B cell (primary cell): ENCODE measurements at regions of chr18 and their contacts with region 1.

Region 1: GRCh38 chr18:58911766-58912165 is 47.1 kb downstream of the ZNF532 start:
- DNase-seq: no peak
- ATAC-seq: no peak
- H3K4me3 ChIP-seq: no peak overlapping the region
- H3K4me3 Mint-ChIP-seq: peak overlapping the region; percentile 9
- H3K27ac ChIP-seq: peak overlapping the region in 1 of 2 donors; percentile 89
- H3K27ac Mint-ChIP-seq: peak overlapping the region; percentile 83
- H3K4me1 ChIP-seq: peaks cover 34 to 52% of the 10 kb centered on the region in 2 donors
- H3K4me1 Mint-ChIP-seq: peaks cover 68% of the 10 kb centered on the region
- H3K27me3 ChIP-seq: no peaks in the 10 kb centered on the region
- H3K27me3 Mint-ChIP-seq: no peaks in the 10 kb centered on the region
- CTCF ChIP-seq: no peak

Region 2: GRCh38 chr18:58896268-58896667 is 15.5 kb before region 1 on chr18:
- CTCF ChIA-PET with region 1: interaction called, 8 read pairs
- POLR2A ChIA-PET with region 1: interaction called, 4 read pairs
- intact Hi-C with region 1: loop called (anchors 2 kb)
- DNase-seq: peak; percentile 72
- ATAC-seq: peak; percentile 88
- H3K4me3 ChIP-seq: peak overlapping the region in 4 of 5 experiments; percentile 31 to 58 (median 50)
- H3K4me3 Mint-ChIP-seq: peak overlapping the region; percentile 79
- H3K27ac ChIP-seq: peak overlapping the region; percentile 70 to 86
- H3K27ac Mint-ChIP-seq: peak overlapping the region; percentile 86
- H3K4me1 ChIP-seq: peaks cover 58 to 62% of the 10 kb centered on the region in 2 donors
- H3K4me1 Mint-ChIP-seq: peaks cover 76% of the 10 kb centered on the region
- H3K27me3 ChIP-seq: no peaks in the 10 kb centered on the region
- H3K27me3 Mint-ChIP-seq: no peaks in the 10 kb centered on the region
- CTCF ChIP-seq: no peak

Region 3: DNA sequence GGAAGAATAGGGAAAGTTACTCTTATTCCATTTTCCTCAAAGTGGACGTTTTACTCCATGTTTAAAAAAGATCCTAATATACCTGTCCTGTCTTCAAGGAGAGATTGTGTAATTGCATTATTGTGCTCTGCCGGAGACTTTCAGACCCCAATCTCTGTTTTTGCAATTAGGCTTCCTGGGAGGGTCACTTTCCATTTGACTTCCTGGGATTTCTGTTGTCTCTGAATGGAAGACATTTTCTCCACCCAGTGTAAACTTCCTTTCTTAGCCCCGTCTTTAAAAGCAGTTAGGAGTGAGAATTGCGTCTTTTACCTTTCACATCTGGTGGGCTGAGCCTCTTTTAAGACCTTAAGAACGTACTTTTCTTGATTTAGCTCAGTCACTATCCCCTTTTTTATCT is 15.9 kb after region 1 on chr18:
- CTCF ChIA-PET with region 1: no interaction called
- POLR2A ChIA-PET with region 1: no interaction called
- intact Hi-C with region 1: no loop called
- DNase-seq: no peak
- ATAC-seq: no peak
- H3K4me3 ChIP-seq: no peak overlapping the region
- H3K4me3 Mint-ChIP-seq: no peak overlapping the region
- H3K27ac ChIP-seq: no peak overlapping the region
- H3K27ac Mint-ChIP-seq: no peak overlapping the region
- H3K4me1 ChIP-seq: peaks cover 12 to 14% of the 10 kb centered on the region in 2 donors
- H3K4me1 Mint-ChIP-seq: peaks cover 31% of the 10 kb centered on the region
- H3K27me3 ChIP-seq: no peaks in the 10 kb centered on the region
- H3K27me3 Mint-ChIP-seq: no peaks in the 10 kb centered on the region
- CTCF ChIP-seq: no peak